ENCODE measurements at regions of chr9 and their contacts with region 1.

Region 1: GRCh38 chr9:107340920-107341632 is 58.0 kb downstream of the RAD23B start:
- DNase-seq: peak; percentile 83
- H3K4me3 Mint-ChIP-seq: no peak overlapping the region
- H3K27ac Mint-ChIP-seq: peak overlapping the region; percentile 5
- H3K4me1 Mint-ChIP-seq: peaks cover 22% of the 10 kb centered on the region
- H3K27me3 Mint-ChIP-seq: no peaks in the 10 kb centered on the region
- CTCF ChIP-seq: peak; percentile 82

Region 2: GRCh38 chr9:107137495-107138202 is 203.4 kb before region 1 on chr9:
- CTCF ChIA-PET with region 1: interaction called, 7 read pairs
- POLR2A ChIA-PET with region 1: no interaction called
- intact Hi-C with region 1: loop called (anchors 5 kb)
- DNase-seq: peak; percentile 59
- H3K4me3 Mint-ChIP-seq: no peak overlapping the region
- H3K27ac Mint-ChIP-seq: no peak overlapping the region
- H3K4me1 Mint-ChIP-seq: no peaks in the 10 kb centered on the region
- H3K27me3 Mint-ChIP-seq: peaks cover 33% of the 10 kb centered on the region
- CTCF ChIP-seq: peak; percentile 71

Region 3: DNA sequence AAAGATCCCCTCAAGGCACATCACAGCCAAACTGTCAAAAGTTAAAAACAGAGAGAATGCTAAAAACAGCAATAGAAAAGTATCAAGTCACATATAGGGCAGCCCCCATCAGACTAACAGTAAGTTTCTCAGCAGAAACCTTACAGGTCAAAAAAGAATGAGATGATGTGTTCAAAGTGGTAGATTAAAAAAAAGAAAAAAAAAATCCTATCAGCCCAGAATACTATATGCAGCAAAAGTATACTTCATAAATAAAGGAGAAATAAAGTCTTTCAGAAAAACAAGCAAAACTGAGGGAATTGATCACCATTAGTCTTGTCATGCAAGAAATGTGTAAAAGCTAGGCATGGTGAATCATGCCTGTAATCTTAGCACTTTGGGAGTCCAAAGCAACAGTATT is 157.9 kb before region 1 on chr9:
- CTCF ChIA-PET with region 1: no interaction called
- POLR2A ChIA-PET with region 1: no interaction called
- intact Hi-C with region 1: no loop called
- DNase-seq: no peak
- H3K4me3 Mint-ChIP-seq: no peak overlapping the region
- H3K27ac Mint-ChIP-seq: no peak overlapping the region
- H3K4me1 Mint-ChIP-seq: no peaks in the 10 kb centered on the region
- H3K27me3 Mint-ChIP-seq: no peaks in the 10 kb centered on the region
- CTCF ChIP-seq: no peak

Region 4: GRCh38 chr9:107243751-107244150 is 97.3 kb before region 1 on chr9:
- CTCF ChIA-PET with region 1: interaction called, 33 read pairs
- POLR2A ChIA-PET with region 1: interaction called, 9 read pairs
- intact Hi-C with region 1: loop called (anchors 1 kb)
- DNase-seq: peak; percentile 87
- H3K4me3 Mint-ChIP-seq: no peak overlapping the region
- H3K27ac Mint-ChIP-seq: peak overlapping the region; percentile 38
- H3K4me1 Mint-ChIP-seq: peaks cover 24% of the 10 kb centered on the region
- H3K27me3 Mint-ChIP-seq: no peaks in the 10 kb centered on the region
- CTCF ChIP-seq: no peak

Region 5: DNA sequence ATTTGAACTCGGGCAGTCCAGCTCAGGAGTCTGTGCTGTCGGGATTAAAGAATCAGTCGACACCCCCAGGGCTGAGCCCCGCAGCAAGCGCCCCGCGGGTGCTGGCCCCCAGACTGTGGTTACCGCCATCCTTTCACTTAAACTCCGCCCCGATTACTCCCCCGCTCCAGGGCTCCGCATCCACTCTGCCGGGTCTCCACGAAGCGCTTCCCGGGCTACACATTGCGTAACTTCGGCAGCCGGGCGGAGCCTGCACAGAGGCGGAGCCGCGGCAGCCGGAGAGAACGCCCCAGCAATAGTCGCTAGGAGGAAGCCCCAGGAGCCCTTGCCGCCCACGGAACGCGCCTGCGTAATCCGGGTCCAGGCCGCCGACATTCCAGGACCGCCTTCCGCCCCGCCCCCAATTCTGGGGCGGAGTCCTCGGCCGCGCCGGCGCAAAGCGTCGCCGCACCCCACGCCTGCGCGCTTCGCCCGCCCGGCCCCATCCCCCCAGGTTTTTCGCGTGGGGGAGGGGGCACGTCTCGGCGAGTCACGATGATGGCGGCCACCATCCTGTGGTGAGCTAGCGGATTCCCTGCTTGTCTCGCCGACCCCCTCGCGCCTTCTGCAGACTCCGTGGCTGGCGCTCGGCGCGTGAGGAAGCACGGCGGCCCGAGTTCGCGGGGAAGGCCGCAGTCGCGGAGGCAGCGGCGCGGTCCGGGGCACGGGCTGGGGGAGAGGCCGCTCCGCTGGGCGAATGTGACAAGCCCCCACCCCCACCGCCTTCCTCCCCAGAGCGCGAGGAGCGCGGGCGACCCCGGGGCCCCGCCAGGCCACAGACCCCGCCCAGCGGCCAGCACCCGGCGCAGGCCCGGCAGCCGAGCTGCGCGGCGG is 58.1 kb before region 1 on chr9 and contains the start of gene RAD23B:
- CTCF ChIA-PET with region 1: interaction called, 5 read pairs
- POLR2A ChIA-PET with region 1: interaction called, 3 read pairs
- intact Hi-C with region 1: loop called (anchors 5 kb)
- DNase-seq: peak; percentile 98
- H3K4me3 Mint-ChIP-seq: peak within 1 kb of the TSS; percentile 88
- H3K27ac Mint-ChIP-seq: peak within 1 kb of the TSS; percentile 92
- H3K4me1 Mint-ChIP-seq: peaks cover 28% of the 10 kb centered on the region
- H3K27me3 Mint-ChIP-seq: no peaks in the 10 kb centered on the region
- CTCF ChIP-seq: no peak
- total RNA-seq, gene RAD23B: 173 and 222 TPM in 2 replicates

Region 6: GRCh38 chr9:107351382-107352045 is 10.4 kb after region 1 on chr9:
- CTCF ChIA-PET with region 1: interaction called, 22 read pairs
- POLR2A ChIA-PET with region 1: interaction called, 5 read pairs
- intact Hi-C with region 1: no loop called
- DNase-seq: peak; percentile 30
- H3K4me3 Mint-ChIP-seq: no peak overlapping the region
- H3K27ac Mint-ChIP-seq: no peak overlapping the region
- H3K4me1 Mint-ChIP-seq: peaks cover 5% of the 10 kb centered on the region
- H3K27me3 Mint-ChIP-seq: no peaks in the 10 kb centered on the region
- CTCF ChIP-seq: no peak

Region 7: GRCh38 chr9:107389617-107390071 is 48.6 kb after region 1 on chr9:
- CTCF ChIA-PET with region 1: interaction called, 12 read pairs
- POLR2A ChIA-PET with region 1: interaction called, 5 read pairs
- intact Hi-C with region 1: no loop called
- DNase-seq: peak; percentile 97
- H3K4me3 Mint-ChIP-seq: peak overlapping the region; percentile 4
- H3K27ac Mint-ChIP-seq: peak overlapping the region; percentile 47
- H3K4me1 Mint-ChIP-seq: peaks cover 40% of the 10 kb centered on the region
- H3K27me3 Mint-ChIP-seq: no peaks in the 10 kb centered on the region
- CTCF ChIP-seq: no peak